HepG2 (cell line): ENCODE measurements at regions of chrX and their contacts with region 1.

Region 1: DNA sequence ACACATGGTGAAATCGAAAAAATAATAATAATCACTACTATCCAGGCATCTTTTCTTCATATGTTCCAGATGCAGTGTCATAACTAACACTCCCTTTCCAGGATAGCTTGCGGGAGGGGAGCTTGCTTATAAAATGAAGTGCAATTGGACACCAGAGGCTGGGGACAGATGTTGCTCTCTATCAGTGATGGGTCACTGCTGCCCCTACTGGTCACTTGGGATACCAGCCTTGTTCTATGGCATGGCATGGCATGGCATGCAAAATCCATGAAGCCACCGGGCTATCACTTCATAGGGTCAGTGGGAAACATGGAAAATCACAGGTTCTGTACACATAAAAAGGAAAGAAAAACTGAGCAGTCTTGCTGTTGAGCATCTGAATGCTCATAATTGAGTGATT is 168.1 kb downstream of the GLRA2 start:
- DNase-seq: peak; percentile 23
- ATAC-seq: peak; percentile 89
- H3K4me3 ChIP-seq: no peak overlapping the region
- H3K27ac ChIP-seq: no peak overlapping the region
- H3K4me1 ChIP-seq: no peaks in the 10 kb centered on the region
- H3K27me3 ChIP-seq: no peaks in the 10 kb centered on the region
- CTCF ChIP-seq: peak; percentile 55
- EP300 ChIP-seq: no peak
- POLR2A ChIP-seq: no peak
- RAD21 ChIP-seq: no peak

Region 2: DNA sequence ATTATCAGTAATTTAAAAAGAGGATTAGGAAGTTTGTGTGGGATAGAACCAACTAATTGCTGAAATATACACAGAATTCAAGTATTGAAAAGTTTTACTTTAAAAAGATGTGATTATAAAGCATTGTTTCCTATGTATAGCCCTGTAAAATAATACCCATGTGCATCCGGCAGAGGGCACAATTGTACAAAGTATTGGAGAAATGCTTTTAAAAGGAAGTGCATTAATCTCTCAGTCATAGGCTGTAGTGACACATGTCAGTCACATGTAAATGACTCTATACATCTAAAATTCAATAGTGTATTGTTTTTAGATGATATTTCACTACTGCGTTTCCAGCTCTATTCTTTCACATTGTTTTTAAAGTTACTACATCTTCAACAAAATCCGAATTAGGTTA is 658.1 kb before region 1 on chrX:
- CTCF ChIA-PET with region 1: no interaction called
- POLR2A ChIA-PET with region 1: no interaction called
- in situ Hi-C with region 1: no loop called
- intact Hi-C with region 1: loop called (anchors 2 kb)
- DNase-seq: peak; percentile 28
- ATAC-seq: peak; percentile 62; the same call in 2 of the 3 replicates
- H3K4me3 ChIP-seq: no peak overlapping the region
- H3K27ac ChIP-seq: no peak overlapping the region
- H3K4me1 ChIP-seq: peaks cover 12% of the 10 kb centered on the region; the same call in 1 of the 2 replicates
- H3K27me3 ChIP-seq: no peaks in the 10 kb centered on the region
- CTCF ChIP-seq: peak; percentile 60
- EP300 ChIP-seq: no peak
- POLR2A ChIP-seq: no peak
- RAD21 ChIP-seq: no peak

Region 3: GRCh38 chrX:14209034-14209433 is 488.4 kb before region 1 on chrX:
- CTCF ChIA-PET with region 1: no interaction called
- POLR2A ChIA-PET with region 1: no interaction called
- in situ Hi-C with region 1: no loop called
- intact Hi-C with region 1: no loop called
- DNase-seq: no peak
- ATAC-seq: no peak
- H3K4me3 ChIP-seq: no peak overlapping the region
- H3K27ac ChIP-seq: no peak overlapping the region
- H3K4me1 ChIP-seq: no peaks in the 10 kb centered on the region
- H3K27me3 ChIP-seq: no peaks in the 10 kb centered on the region
- CTCF ChIP-seq: no peak
- EP300 ChIP-seq: no peak
- POLR2A ChIP-seq: no peak
- RAD21 ChIP-seq: no peak

Region 4: DNA sequence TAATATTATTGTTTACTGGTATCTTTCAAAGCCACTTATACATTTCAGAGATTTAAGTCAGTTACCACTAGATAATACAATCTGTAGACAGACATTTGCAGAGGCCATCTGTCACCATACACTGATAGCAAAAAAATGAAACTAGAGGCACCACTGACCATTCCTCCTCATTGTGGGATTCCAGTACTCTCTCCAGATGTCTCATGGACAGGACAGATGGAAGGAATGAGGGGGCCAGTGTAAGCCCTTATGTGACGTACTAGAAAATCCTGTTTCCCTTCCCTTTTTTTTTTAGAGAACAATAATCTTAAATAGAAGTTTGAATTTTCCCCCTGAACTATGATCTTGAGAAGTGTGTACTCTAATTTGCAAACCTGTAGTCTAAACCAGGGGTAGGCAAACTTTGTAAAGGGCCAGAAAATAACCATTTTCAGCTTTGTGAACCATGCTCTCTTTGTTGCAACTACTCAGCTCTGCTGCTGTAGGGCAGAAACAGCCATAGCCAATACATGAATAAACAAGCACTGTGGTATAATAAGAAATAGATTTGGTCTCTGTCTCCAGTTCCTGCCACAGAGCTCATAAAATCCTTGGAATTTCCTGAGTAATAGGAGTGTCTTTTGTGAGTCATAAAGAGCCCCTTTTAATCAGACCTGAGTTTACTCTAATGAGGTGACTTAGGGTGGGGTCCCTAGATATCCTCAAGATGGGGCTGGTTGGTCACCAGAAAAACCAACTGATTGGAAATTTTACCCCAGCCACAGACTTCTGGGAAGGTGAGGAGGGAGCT is 266.2 kb after region 1 on chrX:
- CTCF ChIA-PET with region 1: no interaction called
- POLR2A ChIA-PET with region 1: no interaction called
- in situ Hi-C with region 1: no loop called
- intact Hi-C with region 1: loop called (anchors 5 kb)
- DNase-seq: no peak
- ATAC-seq: no peak
- H3K4me3 ChIP-seq: no peak overlapping the region
- H3K27ac ChIP-seq: no peak overlapping the region
- H3K4me1 ChIP-seq: no peaks in the 10 kb centered on the region
- H3K27me3 ChIP-seq: no peaks in the 10 kb centered on the region
- CTCF ChIP-seq: no peak
- EP300 ChIP-seq: no peak
- POLR2A ChIP-seq: no peak
- RAD21 ChIP-seq: no peak